ENCODE measurements at regions of chr13 and their contacts with region 1.

Region 1: DNA sequence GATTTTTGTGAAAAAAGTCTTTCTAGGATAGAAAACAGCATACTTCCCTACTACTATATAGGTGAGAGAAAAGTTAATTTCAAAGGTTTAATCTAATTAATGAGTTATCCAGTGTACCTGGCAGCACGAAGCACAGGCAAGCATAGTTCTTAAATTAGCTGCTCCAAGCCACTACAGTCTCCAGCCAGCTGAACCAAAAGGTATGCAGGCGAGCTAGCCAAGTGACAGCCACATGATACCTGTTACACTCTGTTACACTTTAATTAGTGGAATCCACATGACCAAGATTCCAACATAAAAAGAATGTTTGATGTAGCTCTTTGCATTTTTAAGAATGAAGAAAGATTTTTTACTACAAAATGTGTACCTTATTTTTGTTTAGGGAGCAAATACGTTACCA is 15.5 kb downstream of the SLC25A30 start:
- DNase-seq: no peak
- CTCF ChIP-seq: no peak

Region 2: GRCh38 chr13:45417790-45418534 is 15.3 kb after region 1 on chr13 and contains the start of gene SLC25A30:
- CTCF ChIA-PET with region 1: interaction called, 12 read pairs
- POLR2A ChIA-PET with region 1: interaction called, 10 read pairs
- DNase-seq: peak; percentile 92
- CTCF ChIP-seq: no peak

Measured in GM10248 (cell line).